Activated naive CD4-positive, alpha-beta T cell treated with anti-CD3 and anti-CD28 coated beads for 36 hours (primary cell): ENCODE measurements at regions of chr6 and their contacts with region 1.

Region 1: GRCh38 chr6:25138237-25139125 is 140.7 kb upstream of the CARMIL1 start:
- DNase-seq: peak; percentile 82
- H3K4me3 Mint-ChIP-seq: peak overlapping the region; percentile 88
- H3K27ac Mint-ChIP-seq: peak overlapping the region; percentile 98
- H3K4me1 Mint-ChIP-seq: peaks cover 46% of the 10 kb centered on the region
- H3K27me3 Mint-ChIP-seq: no peaks in the 10 kb centered on the region

Region 2: GRCh38 chr6:24855395-24856245 is 282.9 kb before region 1 on chr6:
- CTCF ChIA-PET with region 1: no interaction called
- intact Hi-C with region 1: loop called (anchors 1 kb)
- DNase-seq: peak; percentile 85
- H3K4me3 Mint-ChIP-seq: peak overlapping the region; percentile 36
- H3K27ac Mint-ChIP-seq: peak overlapping the region; percentile 95
- H3K4me1 Mint-ChIP-seq: peaks cover 56% of the 10 kb centered on the region
- H3K27me3 Mint-ChIP-seq: no peaks in the 10 kb centered on the region

Region 3: DNA sequence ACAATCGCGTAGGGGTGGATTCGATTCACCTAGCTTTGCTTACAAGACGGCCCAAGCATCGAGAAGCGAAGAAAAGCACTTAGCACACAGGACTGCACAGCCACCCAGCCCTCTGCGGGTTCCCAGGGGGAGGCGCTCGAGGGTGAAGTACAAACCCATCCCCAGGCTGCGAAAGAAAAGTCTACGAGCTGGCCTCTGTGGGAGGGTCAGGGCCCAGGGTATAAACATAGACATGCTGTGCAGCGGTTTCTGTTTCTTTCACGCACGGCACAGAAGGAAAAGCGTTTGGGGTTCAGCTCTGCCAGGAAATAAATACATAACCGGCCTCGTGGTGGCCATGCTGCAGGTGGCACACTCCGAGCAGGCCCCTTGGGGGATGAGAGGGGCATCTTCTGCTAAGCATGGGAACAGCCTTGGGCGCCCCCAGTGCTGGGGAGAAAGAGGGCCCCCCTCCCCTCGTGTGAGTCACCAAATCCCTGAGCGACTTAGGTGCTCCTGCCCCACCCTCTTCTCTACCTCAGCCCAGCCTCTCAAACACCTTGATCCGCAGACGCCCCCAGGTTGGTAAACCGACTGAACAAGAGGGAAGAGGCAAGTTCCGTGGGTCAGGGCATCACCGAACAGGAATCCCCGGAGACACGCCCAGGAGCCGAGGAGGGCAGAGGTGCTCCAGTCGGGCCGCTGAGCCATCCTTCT is 111.1 kb before region 1 on chr6:
- CTCF ChIA-PET with region 1: interaction called, 5 read pairs
- intact Hi-C with region 1: loop called (anchors 1 kb)
- DNase-seq: peak; percentile 90
- H3K4me3 Mint-ChIP-seq: peak overlapping the region; percentile 65
- H3K27ac Mint-ChIP-seq: peak overlapping the region; percentile 78
- H3K4me1 Mint-ChIP-seq: peaks cover 52% of the 10 kb centered on the region
- H3K27me3 Mint-ChIP-seq: no peaks in the 10 kb centered on the region

Region 4: DNA sequence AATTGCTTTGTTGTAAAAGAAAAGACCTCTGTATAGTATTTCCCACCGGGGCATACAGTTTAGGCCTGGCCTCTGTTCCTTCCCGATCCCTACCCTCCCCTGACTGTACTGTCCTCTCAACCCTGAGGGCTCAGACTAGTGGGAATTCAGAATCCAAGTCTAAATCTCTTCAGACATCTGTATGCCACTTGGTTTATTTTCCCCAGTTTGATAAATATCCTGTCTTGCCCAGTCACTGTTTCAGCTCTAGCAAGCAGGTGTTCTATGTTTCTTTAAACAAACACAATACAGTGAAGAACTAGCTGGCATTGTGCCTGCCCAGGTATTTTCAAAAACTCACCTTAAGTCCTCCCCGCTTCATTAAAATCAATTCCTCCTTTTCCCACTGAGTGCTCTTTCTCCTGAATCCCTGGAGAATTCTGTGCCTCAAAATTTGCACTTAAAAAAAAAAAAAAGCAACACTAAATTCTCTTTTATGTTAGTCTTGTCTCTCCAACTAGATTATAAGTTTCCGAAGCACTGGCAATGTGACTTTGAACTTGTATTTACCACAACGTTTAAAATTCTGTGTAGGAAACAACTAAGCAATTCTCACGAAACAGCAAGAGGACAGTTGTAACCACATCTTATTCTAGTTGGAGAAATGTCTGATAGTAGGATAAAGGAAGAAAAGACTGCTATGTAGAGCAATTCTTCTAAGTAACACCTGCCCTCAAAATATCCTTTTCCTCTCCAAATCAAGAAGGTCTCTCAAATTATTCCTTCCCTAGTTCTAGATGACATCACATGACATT is 28.7 kb after region 1 on chr6:
- CTCF ChIA-PET with region 1: no interaction called
- intact Hi-C with region 1: loop called (anchors 1 kb)
- DNase-seq: no peak
- H3K4me3 Mint-ChIP-seq: no peak overlapping the region
- H3K27ac Mint-ChIP-seq: no peak overlapping the region
- H3K4me1 Mint-ChIP-seq: peaks cover 52% of the 10 kb centered on the region
- H3K27me3 Mint-ChIP-seq: no peaks in the 10 kb centered on the region

Region 5: DNA sequence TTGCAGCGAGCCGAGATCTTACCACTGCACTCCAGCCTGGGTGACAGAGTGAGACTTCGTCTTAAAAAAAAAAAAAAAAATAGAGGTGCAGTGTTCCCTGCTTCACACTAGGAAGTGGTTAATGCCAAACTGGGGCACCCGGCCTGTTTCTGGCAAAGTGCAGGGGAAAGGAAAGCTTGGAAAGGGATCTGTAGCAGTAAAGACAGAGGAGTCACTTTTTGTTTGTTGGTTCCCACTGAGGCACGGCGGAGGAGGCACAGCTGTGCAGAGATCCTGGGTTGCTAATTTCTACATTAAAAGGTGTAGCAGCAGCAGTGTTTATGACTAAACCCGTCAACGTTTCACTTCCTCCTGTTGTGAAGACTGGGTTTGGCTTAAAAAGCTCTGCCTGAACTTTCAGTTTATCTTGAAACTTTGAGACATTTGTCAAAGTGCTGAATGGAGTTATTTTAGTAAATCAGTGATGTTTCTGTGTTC is 266.2 kb after region 1 on chr6:
- CTCF ChIA-PET with region 1: no interaction called
- intact Hi-C with region 1: loop called (anchors 5 kb)
- DNase-seq: peak; percentile 81
- H3K4me3 Mint-ChIP-seq: no peak overlapping the region
- H3K27ac Mint-ChIP-seq: no peak overlapping the region
- H3K4me1 Mint-ChIP-seq: peaks cover 13% of the 10 kb centered on the region
- H3K27me3 Mint-ChIP-seq: no peaks in the 10 kb centered on the region

Region 6: GRCh38 chr6:25975923-25976560 is 837.6 kb after region 1 on chr6:
- CTCF ChIA-PET with region 1: no interaction called
- intact Hi-C with region 1: loop called (anchors 1 kb)
- DNase-seq: no peak
- H3K4me3 Mint-ChIP-seq: no peak overlapping the region
- H3K27ac Mint-ChIP-seq: peak overlapping the region; percentile 46
- H3K4me1 Mint-ChIP-seq: peaks cover 57% of the 10 kb centered on the region
- H3K27me3 Mint-ChIP-seq: no peaks in the 10 kb centered on the region